GM13976 (cell line): ENCODE measurements at regions of chr14 and their contacts with region 1.

Region 1: GRCh38 chr14:88168498-88169165 is 154.4 kb downstream of the KCNK10 start:
- DNase-seq: peak; percentile 60
- CTCF ChIP-seq: peak; percentile 85

Region 2: GRCh38 chr14:88013750-88014349 is 154.8 kb before region 1 on chr14:
- in situ Hi-C with region 1: loop called (anchors 10 kb)
- DNase-seq: no peak
- CTCF ChIP-seq: peak; percentile 78

Region 3: DNA sequence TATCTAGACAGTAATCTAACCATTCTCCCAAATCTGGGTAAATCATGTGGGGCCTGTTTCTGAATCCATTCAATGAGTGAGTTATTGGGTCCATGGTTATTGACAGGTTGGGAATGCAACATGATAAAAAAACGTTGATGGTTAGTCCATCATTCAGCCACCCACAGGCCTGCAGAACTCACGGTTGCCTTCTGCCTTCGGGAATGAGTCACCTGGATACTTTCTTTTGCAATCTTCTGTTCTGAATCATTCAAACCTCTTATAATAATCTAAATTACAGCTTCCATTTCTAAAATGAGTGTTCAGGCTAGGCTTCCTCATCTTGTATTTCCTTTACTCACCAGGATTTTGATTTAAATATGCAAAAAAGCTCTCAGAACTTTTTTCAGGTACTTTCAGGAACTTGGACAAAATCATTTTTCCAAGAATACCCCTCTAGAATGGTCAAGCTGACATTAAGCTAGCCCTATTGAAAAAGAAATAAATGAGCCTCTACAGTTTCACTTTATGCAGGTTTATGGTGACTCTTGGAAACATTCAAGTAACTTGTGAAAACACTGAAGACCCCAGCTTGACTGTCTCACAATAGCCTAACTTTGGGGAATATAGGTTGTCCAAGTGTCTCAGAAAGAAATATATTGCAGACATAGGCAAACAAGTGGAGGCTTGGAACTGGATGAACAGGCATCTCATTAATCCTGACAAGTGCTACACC is 60.0 kb after region 1 on chr14:
- in situ Hi-C with region 1: no loop called
- DNase-seq: no peak
- CTCF ChIP-seq: no peak